Endothelial cell of umbilical vein (primary cell): ENCODE measurements at regions of chr5 and their contacts with region 1.

Region 1: DNA sequence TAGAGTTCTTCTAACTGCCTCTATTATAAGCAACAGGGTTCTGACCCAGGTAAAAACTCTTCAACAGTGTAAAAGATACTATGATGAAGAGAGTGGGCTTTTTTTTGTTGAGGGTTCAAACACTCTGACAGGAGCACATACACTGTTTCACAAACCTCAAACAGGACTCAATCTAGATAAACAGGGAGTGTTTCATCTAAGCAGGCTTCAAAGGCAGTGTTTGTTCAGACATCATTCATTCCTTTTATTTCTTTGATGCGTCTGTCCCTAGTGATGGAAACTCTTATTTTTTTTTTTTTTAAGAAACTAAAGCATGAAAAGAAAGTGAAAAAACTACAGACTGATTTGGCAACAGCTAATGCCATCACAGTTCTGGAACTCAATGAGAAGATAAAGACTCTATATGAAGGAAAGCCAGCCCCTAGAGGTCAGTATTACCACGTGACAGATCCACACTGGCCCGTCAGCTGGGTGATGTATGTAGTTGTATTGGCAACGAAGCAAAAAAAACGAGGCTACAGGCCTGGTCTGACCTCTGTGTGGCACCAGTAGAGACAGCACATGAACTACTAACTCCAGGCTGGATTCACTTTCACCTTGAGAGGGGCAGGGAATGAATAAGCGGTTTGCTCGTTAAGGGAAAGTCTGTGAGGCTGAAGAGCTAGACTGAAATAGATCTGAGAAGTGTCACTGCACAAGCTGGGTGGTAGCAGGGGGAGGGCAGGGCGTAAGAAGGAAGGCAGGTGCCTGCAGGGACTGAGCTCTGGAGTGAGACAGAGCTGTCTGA is 172.2 kb downstream of the CCDC192 start:
- DNase-seq: peak; percentile 70
- H3K4me3 ChIP-seq: no peak overlapping the region
- H3K27ac ChIP-seq: no peak overlapping the region
- H3K4me1 ChIP-seq: peaks cover 27% of the 10 kb centered on the region
- H3K27me3 ChIP-seq: no peaks in the 10 kb centered on the region
- CTCF ChIP-seq: peak in 1 of 2 donors; percentile 29
- POLR2A ChIP-seq: no peak

Region 2: GRCh38 chr5:127564002-127564769 is 311.2 kb before region 1 on chr5:
- CTCF ChIA-PET with region 1: interaction called, 8 read pairs
- POLR2A ChIA-PET with region 1: no interaction called
- dilution Hi-C with region 1: no loop called
- intact Hi-C with region 1: loop called (anchors 1 kb)
- DNase-seq: peak; percentile 67
- H3K4me3 ChIP-seq: no peak overlapping the region
- H3K27ac ChIP-seq: no peak overlapping the region
- H3K4me1 ChIP-seq: no peaks in the 10 kb centered on the region
- H3K27me3 ChIP-seq: peaks cover 21 to 25% of the 10 kb centered on the region in 2 experiments
- CTCF ChIP-seq: peak; percentile 49 to 57
- POLR2A ChIP-seq: no peak

Region 3: GRCh38 chr5:127813633-127814587 is 61.5 kb before region 1 on chr5:
- CTCF ChIA-PET with region 1: interaction called, 5 read pairs
- POLR2A ChIA-PET with region 1: no interaction called
- dilution Hi-C with region 1: no loop called
- intact Hi-C with region 1: loop called (anchors 1 kb)
- DNase-seq: peak; percentile 83
- H3K4me3 ChIP-seq: no peak overlapping the region
- H3K27ac ChIP-seq: peak overlapping the region; percentile 76
- H3K4me1 ChIP-seq: peaks cover 23% of the 10 kb centered on the region
- H3K27me3 ChIP-seq: no peaks in the 10 kb centered on the region
- CTCF ChIP-seq: no peak
- POLR2A ChIP-seq: no peak

Region 4: DNA sequence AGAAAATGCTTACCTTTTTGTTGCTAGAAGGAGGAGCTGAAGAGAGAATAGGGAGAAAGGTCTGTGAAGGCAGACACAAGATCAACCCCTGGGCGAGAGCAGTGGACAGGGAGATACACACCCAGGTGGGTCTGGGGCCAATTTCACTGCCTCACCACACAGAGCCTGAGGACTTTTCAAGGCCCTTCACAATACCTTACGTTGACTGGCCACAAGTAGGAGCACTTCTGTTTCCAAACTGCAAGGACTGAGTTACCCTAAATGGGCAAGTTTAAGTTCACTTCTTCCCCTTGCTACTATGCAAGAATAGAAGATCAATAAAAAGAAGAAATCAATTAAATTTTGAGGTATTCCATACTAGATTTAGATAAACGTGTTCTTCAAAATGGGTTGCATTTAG is 33.6 kb after region 1 on chr5:
- CTCF ChIA-PET with region 1: interaction called, 11 read pairs
- POLR2A ChIA-PET with region 1: no interaction called
- dilution Hi-C with region 1: no loop called
- intact Hi-C with region 1: loop called (anchors 1 kb)
- DNase-seq: peak; percentile 68
- H3K4me3 ChIP-seq: no peak overlapping the region
- H3K27ac ChIP-seq: no peak overlapping the region
- H3K4me1 ChIP-seq: peaks cover 15% of the 10 kb centered on the region
- H3K27me3 ChIP-seq: no peaks in the 10 kb centered on the region
- CTCF ChIP-seq: peak; percentile 56 to 62
- POLR2A ChIP-seq: no peak

Region 5: GRCh38 chr5:128077526-128077925 is 202.1 kb after region 1 on chr5:
- CTCF ChIA-PET with region 1: interaction called, 45 read pairs
- POLR2A ChIA-PET with region 1: no interaction called
- dilution Hi-C with region 1: no loop called
- intact Hi-C with region 1: no loop called
- DNase-seq: no peak
- H3K4me3 ChIP-seq: no peak overlapping the region
- H3K27ac ChIP-seq: no peak overlapping the region
- H3K4me1 ChIP-seq: peaks cover 8% of the 10 kb centered on the region
- H3K27me3 ChIP-seq: no peaks in the 10 kb centered on the region
- CTCF ChIP-seq: no peak
- POLR2A ChIP-seq: no peak

Region 6: GRCh38 chr5:128498844-128499455 is 623.5 kb after region 1 on chr5:
- CTCF ChIA-PET with region 1: interaction called, 9 read pairs
- POLR2A ChIA-PET with region 1: no interaction called
- dilution Hi-C with region 1: no loop called
- intact Hi-C with region 1: loop called (anchors 5 kb)
- DNase-seq: peak; percentile 60
- H3K4me3 ChIP-seq: no peak overlapping the region
- H3K27ac ChIP-seq: no peak overlapping the region
- H3K4me1 ChIP-seq: no peaks in the 10 kb centered on the region
- H3K27me3 ChIP-seq: no peaks in the 10 kb centered on the region
- CTCF ChIP-seq: peak in 1 of 2 donors; percentile 15
- POLR2A ChIP-seq: no peak

Region 7: DNA sequence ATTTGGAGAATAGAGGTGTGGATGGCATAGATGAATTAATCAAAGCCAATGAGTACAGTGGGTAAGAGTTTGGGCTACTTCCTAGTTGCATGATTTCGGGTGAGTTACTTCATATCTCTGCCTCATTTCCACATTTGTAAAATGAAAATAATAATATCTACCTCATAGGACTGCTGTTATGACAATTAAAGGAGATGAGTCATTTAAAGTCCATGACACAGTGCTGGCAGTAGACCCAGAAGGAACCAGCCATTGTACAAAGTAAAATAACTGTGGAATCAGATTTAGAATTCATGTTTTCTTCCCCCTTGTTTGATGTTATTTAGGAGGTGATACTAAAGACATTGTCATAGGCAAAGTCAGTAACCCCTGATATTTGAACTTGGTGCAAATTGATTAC is 950.4 kb after region 1 on chr5:
- CTCF ChIA-PET with region 1: no interaction called
- POLR2A ChIA-PET with region 1: no interaction called
- dilution Hi-C with region 1: no loop called
- intact Hi-C with region 1: loop called (anchors 10 kb)
- DNase-seq: peak; percentile 83
- H3K4me3 ChIP-seq: no peak overlapping the region
- H3K27ac ChIP-seq: peak overlapping the region; percentile 35
- H3K4me1 ChIP-seq: peaks cover 26% of the 10 kb centered on the region
- H3K27me3 ChIP-seq: no peaks in the 10 kb centered on the region
- CTCF ChIP-seq: no peak
- POLR2A ChIP-seq: no peak